Activated naive CD4-positive, alpha-beta T cell treated with anti-CD3 and anti-CD28 coated beads for 36 hours (primary cell): ENCODE measurements at regions of chr2 and their contacts with region 1.

Region 1: GRCh38 chr2:222707689-222708525 is 36.4 kb downstream of the MOGAT1 start:
- DNase-seq: peak; percentile 88
- H3K4me3 Mint-ChIP-seq: no peak overlapping the region
- H3K27ac Mint-ChIP-seq: no peak overlapping the region
- H3K4me1 Mint-ChIP-seq: peaks cover 6% of the 10 kb centered on the region
- H3K27me3 Mint-ChIP-seq: peaks cover 22% of the 10 kb centered on the region

Region 2: DNA sequence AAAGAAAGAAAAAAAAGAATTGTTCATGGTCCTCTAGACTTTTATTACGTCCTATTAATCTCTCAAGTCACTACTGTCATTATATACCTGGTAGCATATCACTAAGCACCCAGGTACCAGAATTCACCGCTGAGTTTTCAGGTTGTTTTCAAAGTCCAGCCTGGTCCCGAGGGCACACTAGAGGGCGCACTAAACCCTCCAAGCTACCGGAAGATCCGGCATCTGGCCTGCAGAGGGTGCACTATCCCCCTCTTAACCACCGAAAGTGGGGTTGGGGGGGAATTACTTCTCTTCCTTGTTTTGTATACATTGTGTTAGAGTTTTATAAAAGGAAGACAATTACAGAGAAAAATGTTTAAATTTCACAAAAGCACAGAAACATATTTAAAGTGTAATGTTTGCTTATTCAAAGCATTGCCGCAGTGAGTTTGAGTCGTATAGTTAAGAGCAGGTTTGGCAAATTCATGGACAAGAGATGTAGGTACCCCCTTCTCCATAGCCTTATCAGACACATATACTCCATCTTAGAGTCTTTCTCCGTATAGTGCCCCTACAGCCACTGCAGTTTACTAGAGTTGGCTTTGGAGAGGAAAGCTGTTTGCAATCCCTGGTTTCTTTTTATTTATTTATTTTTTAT is 17.2 kb before region 1 on chr2:
- CTCF ChIA-PET with region 1: interaction called, 27 read pairs
- intact Hi-C with region 1: no loop called
- DNase-seq: peak; percentile 84
- H3K4me3 Mint-ChIP-seq: no peak overlapping the region
- H3K27ac Mint-ChIP-seq: no peak overlapping the region
- H3K4me1 Mint-ChIP-seq: peaks cover 8% of the 10 kb centered on the region
- H3K27me3 Mint-ChIP-seq: no peaks in the 10 kb centered on the region

Region 3: DNA sequence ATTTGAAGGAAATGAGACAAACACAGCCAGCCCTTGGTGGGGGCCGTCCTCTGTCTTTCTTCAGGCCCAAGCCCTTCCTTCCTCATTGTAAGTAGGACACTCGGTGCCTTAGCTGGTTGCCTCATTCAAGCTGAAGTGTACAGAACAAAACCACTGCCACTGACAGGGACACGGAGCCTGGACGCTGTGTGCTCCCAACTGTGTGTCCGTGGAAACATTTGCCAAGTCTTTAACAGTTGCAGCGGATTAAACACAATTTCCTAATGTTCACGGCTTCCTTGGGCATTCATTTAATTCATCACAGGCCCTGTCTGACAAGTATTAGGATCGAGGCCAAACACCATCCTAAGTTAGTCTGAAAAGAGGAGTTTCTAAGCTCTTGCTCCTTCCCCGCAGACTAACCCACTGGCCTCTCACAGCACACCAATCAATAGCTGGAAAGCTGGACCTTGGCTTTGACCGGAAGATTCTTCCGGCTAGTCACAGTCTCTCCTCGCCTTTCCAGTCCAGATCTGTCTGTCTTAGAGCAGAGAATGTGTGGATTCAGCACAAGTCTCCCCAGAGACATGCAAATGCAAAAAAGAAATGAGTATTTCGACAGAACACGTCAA is 84.2 kb after region 1 on chr2:
- CTCF ChIA-PET with region 1: interaction called, 15 read pairs
- intact Hi-C with region 1: loop called (anchors 1 kb)
- DNase-seq: no peak
- H3K4me3 Mint-ChIP-seq: no peak overlapping the region
- H3K27ac Mint-ChIP-seq: no peak overlapping the region
- H3K4me1 Mint-ChIP-seq: peaks cover 20% of the 10 kb centered on the region
- H3K27me3 Mint-ChIP-seq: no peaks in the 10 kb centered on the region

Region 4: DNA sequence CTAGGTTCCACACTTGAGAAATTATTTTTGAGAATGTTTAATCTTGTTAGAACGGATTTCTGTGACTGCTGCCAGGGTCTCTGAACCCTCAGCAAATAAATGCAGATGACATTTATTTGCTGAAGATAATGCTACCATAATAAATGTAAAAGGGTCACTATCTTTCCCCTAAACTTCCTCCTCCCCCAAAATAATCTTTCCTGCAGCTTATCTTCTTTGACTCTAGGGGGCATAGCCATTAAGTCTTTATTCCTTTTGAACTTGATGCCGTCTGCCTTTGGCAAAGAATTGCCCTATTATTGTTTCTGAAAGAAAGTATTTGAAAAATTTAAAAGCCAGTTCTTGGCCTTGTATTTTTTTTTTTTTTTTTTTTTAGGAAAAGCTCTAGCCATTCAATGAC is 89.4 kb after region 1 on chr2:
- CTCF ChIA-PET with region 1: interaction called, 15 read pairs
- intact Hi-C with region 1: no loop called
- DNase-seq: no peak
- H3K4me3 Mint-ChIP-seq: no peak overlapping the region
- H3K27ac Mint-ChIP-seq: no peak overlapping the region
- H3K4me1 Mint-ChIP-seq: no peaks in the 10 kb centered on the region
- H3K27me3 Mint-ChIP-seq: no peaks in the 10 kb centered on the region

Region 5: DNA sequence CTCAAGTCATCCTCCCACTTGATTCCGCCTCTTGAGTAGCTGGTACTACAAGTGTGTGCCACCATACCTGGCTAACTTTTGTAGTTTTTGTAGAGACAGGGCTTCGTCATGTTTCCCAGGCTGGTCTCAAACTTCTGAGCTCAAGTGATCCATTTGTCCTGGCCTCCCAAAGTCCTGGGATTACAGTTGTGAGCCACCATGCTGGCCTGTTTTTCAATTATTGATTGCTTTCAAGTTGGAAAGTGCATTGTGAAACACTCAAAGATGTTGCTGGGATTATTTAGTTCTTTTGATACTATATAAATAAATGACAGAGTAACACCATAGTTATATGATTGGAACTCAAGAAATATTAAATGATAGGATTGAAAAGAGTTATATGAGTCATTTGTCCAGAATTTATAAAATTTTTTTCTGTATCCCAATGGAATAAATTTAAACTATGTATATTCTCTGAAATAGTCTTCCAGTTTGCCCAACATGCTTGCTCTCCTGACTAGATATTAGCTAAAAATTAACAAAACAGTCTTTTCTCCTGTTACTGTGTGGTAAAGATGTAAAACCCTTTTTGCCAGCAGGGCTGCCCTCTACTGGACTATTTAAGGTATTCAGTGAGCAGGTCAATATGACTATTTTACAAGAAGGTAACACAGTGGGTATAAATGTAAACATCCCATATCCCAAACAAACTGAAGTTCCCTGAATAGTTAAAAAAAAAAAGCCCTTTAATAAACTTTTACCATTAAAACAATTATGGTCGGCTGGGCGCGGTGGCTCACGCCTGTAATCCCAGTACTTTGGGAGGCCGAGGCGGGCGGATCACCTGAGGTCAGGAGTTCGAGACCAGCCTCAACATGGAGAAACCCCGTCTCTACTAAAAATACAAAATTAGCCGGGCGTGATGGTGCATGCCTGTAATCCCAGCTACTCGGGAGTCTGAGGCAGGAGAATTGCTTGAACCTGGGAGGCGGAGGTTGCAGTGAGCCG is 195.6 kb after region 1 on chr2:
- CTCF ChIA-PET with region 1: interaction called, 92 read pairs
- intact Hi-C with region 1: loop called (anchors 1 kb)
- DNase-seq: peak; percentile 55
- H3K4me3 Mint-ChIP-seq: no peak overlapping the region
- H3K27ac Mint-ChIP-seq: no peak overlapping the region
- H3K4me1 Mint-ChIP-seq: peaks cover 23% of the 10 kb centered on the region
- H3K27me3 Mint-ChIP-seq: no peaks in the 10 kb centered on the region

Region 6: DNA sequence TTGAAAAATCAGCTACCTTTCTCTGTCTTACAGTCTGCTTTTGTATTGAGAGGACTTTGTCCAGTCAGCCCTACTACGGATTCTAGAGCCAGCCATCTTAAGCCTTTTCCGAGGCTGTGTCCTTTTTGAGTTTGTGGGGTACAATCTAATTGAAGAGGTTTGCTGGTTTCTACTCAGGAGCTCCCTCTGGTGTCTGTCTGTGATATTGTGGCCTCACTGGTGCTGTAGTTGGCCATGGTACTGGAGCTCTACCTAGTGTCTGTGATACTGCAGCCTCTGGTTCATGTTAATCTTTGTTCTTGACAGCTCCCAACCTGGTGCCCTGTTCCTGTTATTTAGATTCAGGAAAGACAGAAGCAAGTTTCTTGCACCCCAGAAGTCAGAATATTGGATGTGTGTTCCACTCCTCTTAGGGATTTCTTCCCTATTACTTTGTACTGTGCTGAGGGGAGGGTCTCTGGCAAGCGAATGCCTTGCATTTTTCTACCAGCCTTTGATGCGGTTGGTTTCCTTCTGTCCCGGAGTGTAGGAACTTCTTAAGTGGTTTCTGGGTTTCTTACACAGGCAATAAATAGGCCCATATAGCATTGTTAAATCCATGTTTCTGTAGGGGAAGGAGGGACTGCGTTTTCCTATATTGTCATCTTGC is 231.4 kb after region 1 on chr2:
- CTCF ChIA-PET with region 1: interaction called, 38 read pairs
- intact Hi-C with region 1: loop called (anchors 1 kb)
- DNase-seq: peak; percentile 82
- H3K4me3 Mint-ChIP-seq: no peak overlapping the region
- H3K27ac Mint-ChIP-seq: no peak overlapping the region
- H3K4me1 Mint-ChIP-seq: peaks cover 13% of the 10 kb centered on the region
- H3K27me3 Mint-ChIP-seq: no peaks in the 10 kb centered on the region

Region 7: DNA sequence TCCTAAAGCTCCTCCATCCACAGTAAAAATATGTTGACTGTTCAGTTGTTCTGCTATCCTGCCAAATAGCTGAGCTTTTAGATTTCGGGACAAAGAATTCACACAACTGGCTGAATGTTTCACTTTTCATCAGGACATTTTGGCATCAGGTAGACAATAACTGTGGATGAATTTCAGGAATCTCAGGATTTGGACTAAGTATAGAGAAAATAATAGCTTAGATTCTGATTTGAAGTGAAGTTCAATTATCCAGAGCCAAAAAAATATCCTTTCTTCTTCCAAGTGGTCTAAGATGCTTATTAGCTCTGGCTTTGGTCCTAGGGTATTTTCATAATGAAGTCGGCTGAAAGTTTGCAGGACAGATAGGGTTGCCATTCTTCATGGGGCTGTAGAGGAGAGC is 360.2 kb after region 1 on chr2:
- CTCF ChIA-PET with region 1: no interaction called
- intact Hi-C with region 1: no loop called
- DNase-seq: no peak
- H3K4me3 Mint-ChIP-seq: no peak overlapping the region
- H3K27ac Mint-ChIP-seq: no peak overlapping the region
- H3K4me1 Mint-ChIP-seq: no peaks in the 10 kb centered on the region
- H3K27me3 Mint-ChIP-seq: no peaks in the 10 kb centered on the region

Region 8: GRCh38 chr2:223101340-223102039 is 393.6 kb after region 1 on chr2:
- CTCF ChIA-PET with region 1: no interaction called
- intact Hi-C with region 1: loop called (anchors 10 kb)
- DNase-seq: no peak
- H3K4me3 Mint-ChIP-seq: no peak overlapping the region
- H3K27ac Mint-ChIP-seq: no peak overlapping the region
- H3K4me1 Mint-ChIP-seq: no peaks in the 10 kb centered on the region
- H3K27me3 Mint-ChIP-seq: peaks cover 3% of the 10 kb centered on the region